ENCODE measurements at regions of chr5 and their contacts with region 1.

Region 1: GRCh38 chr5:137629646-137630045 is 106.2 kb downstream of the KLHL3 start:
- DNase-seq: peak in 1 of 2 experiments; percentile 58
- H3K4me3 ChIP-seq: no peak overlapping the region
- H3K27ac ChIP-seq: no peak overlapping the region
- H3K4me1 ChIP-seq: peaks cover 3 to 6% (median 4%) of the 10 kb centered on the region in 4 experiments; a peak in 6 of 7 replicates
- H3K27me3 ChIP-seq: no peaks in the 10 kb centered on the region
- CTCF ChIP-seq: peak in 2 of 3 experiments; percentile 77 to 84; a peak in 3 of 4 replicates
- EP300 ChIP-seq: no peak
- POLR2A ChIP-seq: no peak
- RAD21 ChIP-seq: peak; percentile 94 to 96

Region 2: GRCh38 chr5:137613554-137614265 is 15.9 kb before region 1 on chr5:
- CTCF ChIA-PET with region 1: interaction called, 38 read pairs
- POLR2A ChIA-PET with region 1: interaction called, 3 read pairs
- DNase-seq: no peak
- H3K4me3 ChIP-seq: no peak overlapping the region
- H3K27ac ChIP-seq: no peak overlapping the region
- H3K4me1 ChIP-seq: peaks cover 0 to 4% (median 0%) of the 10 kb centered on the region in 4 experiments; a peak in 1 of 7 replicates
- H3K27me3 ChIP-seq: no peaks in the 10 kb centered on the region
- CTCF ChIP-seq: no peak
- EP300 ChIP-seq: no peak
- POLR2A ChIP-seq: no peak
- RAD21 ChIP-seq: no peak

Region 3: DNA sequence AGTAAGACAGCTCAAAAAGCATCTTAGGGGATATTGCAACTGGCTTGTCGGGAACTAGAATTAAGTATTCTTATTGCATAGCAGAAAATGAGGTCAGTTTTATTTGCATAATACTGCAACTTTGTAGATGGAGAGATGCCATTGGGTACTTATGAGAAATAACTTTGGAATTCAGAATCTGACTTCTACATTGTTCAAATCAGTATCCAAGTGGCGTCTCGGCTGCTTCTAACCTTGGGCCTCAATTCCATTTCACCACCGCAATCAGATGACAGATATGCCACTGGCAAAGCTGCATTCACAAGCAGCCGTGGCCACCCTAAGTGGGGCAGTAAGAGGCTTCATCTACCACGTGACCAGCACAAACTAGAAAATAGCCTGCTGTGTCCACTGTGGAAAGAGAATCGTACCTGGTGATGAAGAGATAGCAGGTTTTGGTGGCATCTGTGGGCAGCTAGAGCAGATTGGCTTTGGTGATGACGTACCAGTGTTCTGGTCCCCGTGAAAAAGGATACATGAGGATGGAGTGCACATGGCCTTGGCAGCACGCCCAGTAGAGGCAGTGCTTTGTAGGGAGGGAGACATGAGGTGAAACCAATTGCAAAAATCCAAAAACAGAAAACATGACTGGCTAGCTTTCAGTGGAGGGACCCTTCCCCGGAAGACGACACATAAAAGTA is 10.3 kb before region 1 on chr5:
- CTCF ChIA-PET with region 1: interaction called, 38 read pairs
- POLR2A ChIA-PET with region 1: interaction called, 3 read pairs
- DNase-seq: no peak
- H3K4me3 ChIP-seq: no peak overlapping the region
- H3K27ac ChIP-seq: no peak overlapping the region
- H3K4me1 ChIP-seq: no peaks in the 10 kb centered on the region; a peak in 1 of 7 replicates
- H3K27me3 ChIP-seq: no peaks in the 10 kb centered on the region
- CTCF ChIP-seq: no peak
- EP300 ChIP-seq: no peak
- POLR2A ChIP-seq: no peak
- RAD21 ChIP-seq: no peak

Region 4: DNA sequence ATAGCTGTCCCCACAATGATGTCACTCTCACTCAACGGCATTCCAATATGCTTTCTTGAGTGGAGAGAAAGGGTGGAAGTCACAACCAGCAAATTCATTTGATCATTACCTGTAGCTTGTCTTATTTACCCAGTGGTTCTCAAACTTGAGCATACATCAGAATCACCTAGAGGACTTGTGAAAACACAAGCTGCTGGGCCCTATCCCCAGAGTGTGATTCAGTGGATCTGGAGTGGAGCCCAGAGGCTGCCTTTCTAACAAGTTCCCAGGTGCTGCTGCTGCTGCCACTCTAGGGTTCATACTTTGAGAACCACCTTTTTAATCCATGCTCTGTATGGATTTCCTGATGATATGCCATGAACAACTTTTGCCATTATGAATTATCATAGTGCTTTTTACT is 11.5 kb after region 1 on chr5:
- CTCF ChIA-PET with region 1: interaction called, 26 read pairs
- POLR2A ChIA-PET with region 1: interaction called, 3 read pairs
- DNase-seq: no peak
- H3K4me3 ChIP-seq: no peak overlapping the region
- H3K27ac ChIP-seq: no peak overlapping the region
- H3K4me1 ChIP-seq: no peaks in the 10 kb centered on the region
- H3K27me3 ChIP-seq: no peaks in the 10 kb centered on the region
- CTCF ChIP-seq: no peak
- EP300 ChIP-seq: no peak
- POLR2A ChIP-seq: no peak
- RAD21 ChIP-seq: no peak

Region 5: DNA sequence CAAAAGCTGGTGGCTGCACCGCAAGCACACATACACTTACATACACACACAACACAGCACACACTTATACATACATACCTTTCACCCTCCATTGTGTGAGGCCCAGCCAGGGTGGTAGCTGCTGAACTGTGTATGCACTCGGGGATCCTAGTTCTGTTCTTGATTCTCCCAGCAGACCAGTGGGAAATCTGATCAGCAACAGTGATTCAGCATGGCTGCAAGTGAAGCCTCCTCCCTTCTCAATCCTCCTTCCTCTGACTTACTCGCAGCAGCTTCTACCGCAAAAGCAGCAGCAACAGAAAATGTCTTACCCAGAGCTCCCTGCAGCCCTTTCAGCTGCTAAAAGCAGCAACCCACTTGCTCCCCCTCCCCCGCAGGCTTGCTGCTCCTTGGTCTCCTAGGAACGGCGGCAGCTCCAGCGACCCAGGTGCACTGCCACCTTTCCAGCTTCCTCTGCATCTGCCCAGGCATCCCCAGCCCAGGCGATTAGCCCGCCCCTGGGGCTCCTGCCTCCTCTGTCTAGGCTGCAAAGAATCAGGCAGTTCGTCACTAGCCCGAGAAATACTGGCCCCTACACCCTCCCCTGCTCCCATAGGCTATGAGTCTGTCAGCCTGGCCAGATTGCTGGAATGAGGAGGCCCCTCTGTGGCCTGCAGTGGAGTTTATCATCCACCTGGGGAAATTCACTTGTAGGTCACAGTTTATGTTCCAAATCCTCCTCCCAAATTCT is 106.1 kb after region 1 on chr5 and contains the start of gene KLHL3:
- CTCF ChIA-PET with region 1: interaction called, 82 read pairs
- POLR2A ChIA-PET with region 1: interaction called, 3 read pairs
- DNase-seq: peak; percentile 76 to 87
- H3K4me3 ChIP-seq: peak within 1 kb of the TSS; percentile 67 to 90 (median 72)
- H3K27ac ChIP-seq: peak within 1 kb of the TSS; percentile 63
- H3K4me1 ChIP-seq: peaks cover 3 to 14% (median 6%) of the 10 kb centered on the region in 4 experiments; a peak in 5 of 7 replicates
- H3K27me3 ChIP-seq: no peaks in the 10 kb centered on the region
- CTCF ChIP-seq: peak; percentile 38 to 60 (median 39)
- EP300 ChIP-seq: no peak
- POLR2A ChIP-seq: peak in 1 of 2 experiments; percentile 59; a peak in 2 of 3 replicates
- RAD21 ChIP-seq: peak; percentile 76 to 79
- total RNA-seq, gene KLHL3: 10.5 and 13.7 TPM in 2 replicates

Region 6: GRCh38 chr5:137743031-137743640 is 113.5 kb after region 1 on chr5:
- CTCF ChIA-PET with region 1: interaction called, 82 read pairs
- POLR2A ChIA-PET with region 1: no interaction called
- DNase-seq: peak in 1 of 2 experiments; percentile 49
- H3K4me3 ChIP-seq: no peak overlapping the region
- H3K27ac ChIP-seq: no peak overlapping the region
- H3K4me1 ChIP-seq: no peaks in the 10 kb centered on the region
- H3K27me3 ChIP-seq: peaks cover 0 to 1% (median 0%) of the 10 kb centered on the region in 4 experiments; a peak in 1 of 7 replicates
- CTCF ChIP-seq: peak; percentile 25 to 70 (median 58)
- EP300 ChIP-seq: no peak
- POLR2A ChIP-seq: no peak
- RAD21 ChIP-seq: peak; percentile 66 to 69

Region 7: DNA sequence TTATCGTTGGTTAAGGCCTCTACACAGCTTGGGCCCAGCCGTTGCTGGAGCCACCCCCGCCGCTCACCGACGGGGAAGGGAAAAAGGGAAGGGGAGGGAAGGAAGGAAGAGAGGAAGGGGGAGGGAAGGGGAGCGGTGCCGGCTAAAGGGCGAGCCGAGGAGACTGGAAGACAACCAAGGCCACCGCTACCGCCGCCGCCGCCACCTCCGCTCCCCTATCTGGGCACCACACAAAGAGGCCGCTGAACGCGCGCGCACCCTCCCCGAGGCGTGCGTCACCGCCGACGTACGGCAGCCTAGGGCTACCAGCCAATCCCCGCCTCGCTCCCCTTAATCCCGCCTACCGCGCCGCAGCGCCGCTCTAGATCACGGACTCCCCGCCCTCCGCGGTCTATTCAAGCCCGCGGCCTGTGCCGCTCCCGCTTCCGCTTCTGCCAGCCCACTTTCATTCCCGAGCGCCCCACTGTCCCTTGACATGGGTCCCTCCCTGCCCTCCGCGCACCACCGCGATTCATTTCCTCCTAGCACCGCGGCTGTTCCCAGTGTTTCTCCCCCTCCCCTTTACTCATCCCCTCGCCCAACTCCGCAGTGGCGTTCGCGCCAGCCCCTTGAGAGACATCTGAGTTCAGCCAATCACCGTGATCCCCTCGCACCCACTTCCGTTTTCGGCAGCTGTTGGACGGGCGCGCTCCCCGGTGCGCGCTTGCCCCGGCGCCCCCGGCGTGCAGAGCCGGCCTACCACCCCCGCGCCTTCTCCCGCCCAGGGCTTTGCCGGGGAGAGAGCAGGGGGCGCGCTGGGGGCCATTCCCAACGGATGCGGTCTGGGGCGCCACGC is 124.7 kb after region 1 on chr5 and contains the start of gene HNRNPA0:
- CTCF ChIA-PET with region 1: interaction called, 10 read pairs
- POLR2A ChIA-PET with region 1: interaction called, 6 read pairs
- DNase-seq: peak; percentile 82 to 96
- H3K4me3 ChIP-seq: peak within 1 kb of the TSS; percentile 92 to 100 (median 100)
- H3K27ac ChIP-seq: peak within 1 kb of the TSS; percentile 100
- H3K4me1 ChIP-seq: peaks cover 0 to 3% (median 0%) of the 10 kb centered on the region in 4 experiments; a peak in 3 of 7 replicates
- H3K27me3 ChIP-seq: no peaks in the 10 kb centered on the region
- CTCF ChIP-seq: no peak
- EP300 ChIP-seq: peak; percentile 18 to 100; a peak in 2 of 3 replicates
- POLR2A ChIP-seq: peak; percentile 97 to 99
- RAD21 ChIP-seq: no peak; a peak in 1 of 4 replicates
- total RNA-seq, gene HNRNPA0: 71.3 and 74.9 TPM in 2 replicates

Region 8: DNA sequence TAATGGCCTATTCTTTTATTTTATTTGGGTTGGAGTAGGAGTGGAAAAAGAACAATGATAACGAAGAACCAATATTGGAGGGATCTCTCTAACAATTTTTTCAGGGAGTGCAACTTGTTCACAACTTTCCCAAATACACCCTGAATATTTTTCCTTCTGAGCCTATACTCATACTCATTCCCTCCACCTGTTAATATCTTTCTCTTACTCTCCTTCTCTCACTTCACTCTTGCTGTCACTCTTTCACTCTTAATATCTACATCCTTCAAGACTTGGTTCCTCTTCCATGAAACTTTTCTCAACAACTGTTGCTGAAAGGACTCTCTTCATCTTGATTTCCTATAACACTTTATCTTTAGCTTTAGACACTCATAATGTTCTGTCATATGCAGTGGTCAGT is 199.0 kb after region 1 on chr5:
- CTCF ChIA-PET with region 1: no interaction called
- POLR2A ChIA-PET with region 1: no interaction called
- DNase-seq: no peak
- H3K4me3 ChIP-seq: no peak overlapping the region
- H3K27ac ChIP-seq: no peak overlapping the region
- H3K4me1 ChIP-seq: peaks cover 0 to 8% (median 1%) of the 10 kb centered on the region in 4 experiments; a peak in 1 of 7 replicates
- H3K27me3 ChIP-seq: no peaks in the 10 kb centered on the region
- CTCF ChIP-seq: no peak
- EP300 ChIP-seq: no peak
- POLR2A ChIP-seq: no peak
- RAD21 ChIP-seq: no peak

Measured in H1 (cell line).